ENCODE measurements at regions of chr12 and their contacts with region 1.

Region 1: DNA sequence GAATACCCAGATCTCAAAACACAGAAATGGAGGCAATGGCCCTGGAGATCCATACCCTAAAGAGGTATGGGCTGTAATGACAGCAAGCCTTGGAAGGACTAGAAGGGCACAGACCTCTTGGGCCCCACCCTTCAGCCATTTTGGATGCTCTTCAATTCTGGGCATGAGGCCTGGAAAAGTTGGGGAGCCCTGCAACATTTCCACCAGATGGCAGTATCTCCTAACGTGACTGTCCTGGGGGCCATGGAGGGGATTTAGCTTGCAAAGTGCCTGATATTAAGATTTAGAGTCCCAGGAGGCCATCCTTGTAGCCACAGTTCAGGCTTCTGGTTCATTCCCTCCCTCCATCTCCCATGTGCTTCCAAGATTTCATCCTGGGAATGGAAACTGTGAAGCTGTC is 30.2 kb downstream of the KCNA5 start:
- DNase-seq: peak; percentile 56
- ATAC-seq: peak; percentile 68
- H3K4me3 Mint-ChIP-seq: no peak overlapping the region
- H3K27ac Mint-ChIP-seq: no peak overlapping the region
- H3K4me1 Mint-ChIP-seq: peaks cover 21% of the 10 kb centered on the region
- H3K27me3 Mint-ChIP-seq: peaks cover 5% of the 10 kb centered on the region
- CTCF ChIP-seq: no peak

Region 2: GRCh38 chr12:4700621-4701026 is 373.2 kb before region 1 on chr12:
- CTCF ChIA-PET with region 1: no interaction called
- POLR2A ChIA-PET with region 1: no interaction called
- DNase-seq: peak; percentile 33
- ATAC-seq: peak; percentile 53; the same call in 1 of the 2 replicates
- H3K4me3 Mint-ChIP-seq: no peak overlapping the region
- H3K27ac Mint-ChIP-seq: peak overlapping the region; percentile 22
- H3K4me1 Mint-ChIP-seq: peaks cover 8% of the 10 kb centered on the region
- H3K27me3 Mint-ChIP-seq: no peaks in the 10 kb centered on the region
- CTCF ChIP-seq: no peak

Region 3: DNA sequence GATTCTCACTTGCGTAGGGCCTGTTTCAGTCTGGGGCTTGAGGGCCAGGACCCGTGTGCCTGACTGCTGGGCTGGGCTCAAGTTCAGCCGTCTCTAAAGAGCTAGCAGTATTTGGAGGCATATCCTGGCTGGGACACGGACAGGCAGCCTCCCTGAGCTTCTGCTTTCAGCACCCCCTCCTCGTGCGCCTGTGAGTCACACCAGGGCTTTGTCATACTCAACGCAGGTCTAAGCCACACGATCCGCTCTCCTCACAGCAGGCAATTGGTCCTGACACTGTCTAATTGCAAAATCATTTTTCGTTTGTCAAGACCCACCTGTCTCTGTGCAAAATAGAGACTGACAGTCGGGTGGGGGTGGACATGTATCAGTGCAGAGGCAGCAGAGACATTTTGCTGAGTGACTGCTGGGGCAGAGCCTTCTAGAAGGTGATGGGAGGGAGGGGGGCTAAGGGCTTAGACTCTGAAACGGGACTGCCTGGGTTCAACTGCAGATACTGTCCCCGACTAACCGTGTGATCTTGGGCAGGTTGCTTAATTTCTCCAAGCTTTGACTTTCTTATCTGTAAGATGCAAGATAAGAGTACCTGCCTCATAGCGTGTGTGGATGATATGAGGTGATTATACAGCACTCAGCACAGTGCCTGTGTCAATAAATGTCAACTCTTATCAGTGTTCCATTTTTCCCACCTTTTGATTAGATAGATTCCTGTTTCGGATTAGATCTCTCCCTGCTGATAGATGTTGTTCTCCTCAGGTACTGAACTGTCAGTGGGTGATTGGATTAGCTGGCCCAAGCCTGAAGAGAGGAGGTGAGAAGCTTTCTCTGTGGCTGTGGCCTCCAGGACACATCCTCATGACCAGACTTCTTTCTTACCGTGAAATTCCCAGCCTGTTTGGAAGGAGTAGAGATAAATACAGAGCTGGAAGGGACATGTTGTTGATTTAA is 111.0 kb before region 1 on chr12:
- CTCF ChIA-PET with region 1: no interaction called
- POLR2A ChIA-PET with region 1: no interaction called
- DNase-seq: no peak
- ATAC-seq: peak; percentile 47; the same call in 1 of the 2 replicates
- H3K4me3 Mint-ChIP-seq: no peak overlapping the region
- H3K27ac Mint-ChIP-seq: no peak overlapping the region
- H3K4me1 Mint-ChIP-seq: no peaks in the 10 kb centered on the region
- H3K27me3 Mint-ChIP-seq: peaks cover 6% of the 10 kb centered on the region
- CTCF ChIP-seq: no peak

Region 4: GRCh38 chr12:5059358-5059757 is 14.5 kb before region 1 on chr12:
- CTCF ChIA-PET with region 1: interaction called, 29 read pairs
- POLR2A ChIA-PET with region 1: no interaction called
- DNase-seq: no peak
- ATAC-seq: no peak
- H3K4me3 Mint-ChIP-seq: no peak overlapping the region
- H3K27ac Mint-ChIP-seq: no peak overlapping the region
- H3K4me1 Mint-ChIP-seq: no peaks in the 10 kb centered on the region
- H3K27me3 Mint-ChIP-seq: peaks cover 19% of the 10 kb centered on the region
- CTCF ChIP-seq: no peak

Region 5: GRCh38 chr12:5083955-5084849 is 10.3 kb after region 1 on chr12:
- CTCF ChIA-PET with region 1: interaction called, 15 read pairs
- POLR2A ChIA-PET with region 1: no interaction called
- DNase-seq: no peak
- ATAC-seq: peak; percentile 55
- H3K4me3 Mint-ChIP-seq: no peak overlapping the region
- H3K27ac Mint-ChIP-seq: no peak overlapping the region
- H3K4me1 Mint-ChIP-seq: peaks cover 13% of the 10 kb centered on the region
- H3K27me3 Mint-ChIP-seq: no peaks in the 10 kb centered on the region; the same call in 1 of the 2 replicates
- CTCF ChIP-seq: peak; percentile 42